B cell (primary cell): ENCODE measurements at regions of chr19 and their contacts with region 1.

Region 1: DNA sequence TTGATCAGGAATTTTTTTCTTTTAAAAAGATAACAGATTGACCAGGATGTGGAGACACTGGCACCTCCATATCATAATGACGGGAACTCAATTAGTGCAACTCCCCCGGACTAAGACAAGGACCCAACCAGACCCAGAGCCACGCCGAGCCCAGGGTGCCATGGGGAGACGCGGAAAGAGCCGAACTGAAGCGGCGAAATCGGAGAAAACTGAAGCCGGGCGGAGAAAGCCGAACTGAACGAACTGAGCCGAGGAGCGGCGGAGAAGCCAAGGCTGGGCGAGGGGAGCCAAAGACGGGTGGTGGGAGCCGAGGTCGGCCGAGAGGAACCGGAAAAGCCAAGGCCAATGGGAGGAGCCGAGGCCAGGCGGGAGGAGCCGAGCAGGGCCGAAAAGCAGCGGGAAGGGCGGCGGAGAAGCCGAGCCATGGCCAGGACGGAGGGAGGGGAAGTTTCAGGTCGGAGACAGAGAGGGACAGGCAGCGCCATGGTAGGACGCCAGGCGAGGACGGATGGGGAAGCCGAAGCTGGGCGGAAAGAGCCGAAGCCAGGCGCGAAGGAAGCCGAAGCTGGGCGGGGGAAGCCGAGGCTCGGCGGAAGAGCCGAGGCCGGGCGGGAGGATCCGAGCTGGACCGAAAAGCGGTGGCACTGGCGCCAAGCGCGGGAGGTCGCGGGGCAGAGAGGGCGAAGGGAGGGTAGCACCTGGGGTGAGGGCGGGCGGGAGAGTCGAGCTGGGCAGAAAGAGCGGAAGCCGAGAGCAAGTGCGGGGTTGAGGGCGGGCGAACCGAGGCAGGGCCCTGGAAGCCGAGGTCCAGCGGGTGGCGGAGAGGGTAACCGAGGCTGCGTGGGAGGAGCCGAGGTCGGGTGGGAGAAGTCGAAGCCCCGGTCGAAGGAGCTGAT is 29.4 kb downstream of the ZNF557 start:
- DNase-seq: peak; percentile 91
- ATAC-seq: peak; percentile 91
- H3K4me3 ChIP-seq: peak overlapping the region; percentile 46 to 87 (median 82)
- H3K4me3 Mint-ChIP-seq: peak overlapping the region; percentile 93
- H3K27ac ChIP-seq: peak overlapping the region; percentile 76 to 93
- H3K27ac Mint-ChIP-seq: peak overlapping the region; percentile 90
- H3K4me1 ChIP-seq: peaks cover 10 to 14% of the 10 kb centered on the region in 2 donors
- H3K4me1 Mint-ChIP-seq: peaks cover 23% of the 10 kb centered on the region
- H3K27me3 ChIP-seq: no peaks in the 10 kb centered on the region
- H3K27me3 Mint-ChIP-seq: no peaks in the 10 kb centered on the region
- CTCF ChIP-seq: no peak

Region 2: GRCh38 chr19:7069042-7069903 is 29.7 kb before region 1 on chr19 and contains the start of gene ZNF557:
- CTCF ChIA-PET with region 1: interaction called, 4 read pairs
- POLR2A ChIA-PET with region 1: interaction called, 6 read pairs
- intact Hi-C with region 1: loop called (anchors 1 kb)
- DNase-seq: peak; percentile 99
- ATAC-seq: peak; percentile 98
- H3K4me3 ChIP-seq: peak within 1 kb of the TSS; percentile 78 to 99 (median 93)
- H3K4me3 Mint-ChIP-seq: peak within 1 kb of the TSS; percentile 92
- H3K27ac ChIP-seq: peak within 1 kb of the TSS; percentile 80 to 91
- H3K27ac Mint-ChIP-seq: peak within 1 kb of the TSS; percentile 92
- H3K4me1 ChIP-seq: peaks cover 8 to 17% of the 10 kb centered on the region in 2 donors
- H3K4me1 Mint-ChIP-seq: peaks cover 19% of the 10 kb centered on the region
- H3K27me3 ChIP-seq: no peaks in the 10 kb centered on the region
- H3K27me3 Mint-ChIP-seq: no peaks in the 10 kb centered on the region
- CTCF ChIP-seq: no peak
- total RNA-seq, gene ZNF557: 25.5 and 26.8 TPM in 2 replicates

Region 3: DNA sequence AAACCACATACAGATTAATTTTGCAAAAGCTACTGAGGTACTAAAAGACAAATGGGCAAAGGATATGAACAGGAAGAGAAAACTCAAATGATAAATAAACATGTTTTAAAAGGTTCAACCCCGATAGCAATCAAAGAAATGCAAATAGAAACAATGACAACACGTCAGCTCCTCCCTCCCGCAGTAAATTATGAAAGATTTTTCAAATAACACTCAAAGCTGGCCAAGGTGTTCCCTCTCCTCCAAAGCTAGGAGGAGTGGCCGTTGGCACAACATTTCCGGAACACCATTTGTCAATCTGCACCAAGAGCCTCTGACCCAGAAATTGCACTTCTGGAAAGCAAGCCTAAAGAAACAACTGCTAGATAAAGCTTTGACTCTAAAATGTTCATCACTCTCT is 167.0 kb after region 1 on chr19:
- CTCF ChIA-PET with region 1: no interaction called
- POLR2A ChIA-PET with region 1: interaction called, 11 read pairs
- intact Hi-C with region 1: no loop called
- DNase-seq: no peak
- ATAC-seq: no peak
- H3K4me3 ChIP-seq: no peak overlapping the region
- H3K4me3 Mint-ChIP-seq: no peak overlapping the region
- H3K27ac ChIP-seq: no peak overlapping the region
- H3K27ac Mint-ChIP-seq: no peak overlapping the region
- H3K4me1 ChIP-seq: no peaks in the 10 kb centered on the region
- H3K4me1 Mint-ChIP-seq: no peaks in the 10 kb centered on the region
- H3K27me3 ChIP-seq: no peaks in the 10 kb centered on the region
- H3K27me3 Mint-ChIP-seq: peaks cover 7% of the 10 kb centered on the region
- CTCF ChIP-seq: no peak

Region 4: DNA sequence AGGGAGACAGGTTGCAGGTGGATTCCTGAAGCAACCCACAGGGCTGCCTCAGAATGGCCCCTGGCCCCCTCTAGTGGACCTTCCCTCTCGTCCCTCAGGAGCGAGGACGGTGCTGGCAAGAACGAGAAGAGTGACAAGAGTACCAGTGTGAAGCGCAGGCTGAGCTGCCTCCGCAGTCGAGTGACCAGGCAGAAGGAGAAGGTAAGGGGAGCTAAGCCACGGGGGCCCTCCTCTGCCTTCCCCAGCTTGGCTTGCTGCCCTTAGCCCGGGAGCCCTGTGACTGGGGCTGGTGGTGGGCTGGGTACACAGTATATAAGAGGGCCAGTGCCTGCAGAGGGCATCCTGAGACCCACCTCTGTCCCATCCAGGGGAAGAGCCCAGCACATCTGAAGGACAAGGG is 283.7 kb after region 1 on chr19:
- CTCF ChIA-PET with region 1: interaction called, 15 read pairs
- POLR2A ChIA-PET with region 1: no interaction called
- intact Hi-C with region 1: no loop called
- DNase-seq: no peak
- ATAC-seq: no peak
- H3K4me3 ChIP-seq: no peak overlapping the region
- H3K4me3 Mint-ChIP-seq: no peak overlapping the region
- H3K27ac ChIP-seq: peak overlapping the region in 1 of 2 donors; percentile 52
- H3K27ac Mint-ChIP-seq: peak overlapping the region; percentile 37
- H3K4me1 ChIP-seq: peaks cover 0 to 12% of the 10 kb centered on the region in 2 donors
- H3K4me1 Mint-ChIP-seq: peaks cover 20% of the 10 kb centered on the region
- H3K27me3 ChIP-seq: no peaks in the 10 kb centered on the region
- H3K27me3 Mint-ChIP-seq: no peaks in the 10 kb centered on the region
- CTCF ChIP-seq: no peak

Region 5: DNA sequence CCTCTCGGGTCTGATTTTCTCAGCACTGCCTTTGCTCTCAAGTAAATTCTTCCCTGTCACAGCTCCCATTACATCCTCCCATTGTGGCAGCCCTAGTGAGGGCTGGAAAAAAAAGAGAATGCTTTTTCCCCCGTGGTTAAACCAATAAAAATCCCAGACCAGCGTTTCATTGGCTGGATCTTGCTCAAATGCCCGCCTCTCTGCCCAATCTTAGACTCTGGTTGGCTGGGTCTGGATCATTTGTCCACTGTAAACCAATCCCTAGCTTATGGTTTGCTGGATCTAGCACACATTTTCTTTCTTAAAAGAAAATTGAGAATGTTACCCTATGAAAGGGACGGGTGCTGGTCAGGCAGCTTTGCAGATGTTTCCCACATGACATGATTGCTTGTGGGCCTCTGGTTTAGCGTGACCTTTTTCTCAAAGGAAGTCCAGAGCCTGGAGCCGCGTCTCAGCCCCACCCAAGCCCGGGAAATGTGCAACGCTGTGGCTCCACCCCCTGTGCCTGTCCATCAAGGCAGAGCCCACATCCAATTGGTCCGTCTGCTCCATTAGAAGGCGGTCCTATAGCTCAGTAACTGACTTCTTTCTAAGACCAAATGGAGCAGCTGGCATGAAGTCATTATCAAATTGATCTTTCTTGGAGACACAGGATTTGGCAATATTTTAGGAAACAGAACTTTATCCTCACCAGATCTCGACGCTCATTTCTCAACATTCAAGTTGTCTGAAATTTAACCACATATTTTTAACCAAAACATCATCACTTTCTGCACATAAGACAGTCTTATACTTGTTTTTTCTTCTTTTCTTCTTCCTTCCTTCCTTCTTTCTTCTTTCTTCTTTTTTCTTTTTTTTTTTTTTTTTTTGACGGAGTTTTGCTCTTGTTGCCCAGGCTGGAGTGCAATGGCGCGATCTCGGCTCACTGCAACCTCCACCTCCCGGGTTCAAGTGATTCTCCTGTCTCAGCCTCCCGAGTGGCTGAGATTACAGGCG is 575.4 kb after region 1 on chr19:
- CTCF ChIA-PET with region 1: interaction called, 5 read pairs
- POLR2A ChIA-PET with region 1: no interaction called
- intact Hi-C with region 1: loop called (anchors 5 kb)
- DNase-seq: no peak
- ATAC-seq: no peak
- H3K4me3 ChIP-seq: no peak overlapping the region
- H3K4me3 Mint-ChIP-seq: no peak overlapping the region
- H3K27ac ChIP-seq: no peak overlapping the region
- H3K27ac Mint-ChIP-seq: no peak overlapping the region
- H3K4me1 ChIP-seq: peaks cover 29 to 33% of the 10 kb centered on the region in 2 donors
- H3K4me1 Mint-ChIP-seq: peaks cover 39% of the 10 kb centered on the region
- H3K27me3 ChIP-seq: peaks cover 0 to 57% (median 13%) of the 10 kb centered on the region in 4 experiments
- H3K27me3 Mint-ChIP-seq: peaks cover 45% of the 10 kb centered on the region
- CTCF ChIP-seq: no peak